HepG2 (cell line): ENCODE measurements at regions of chr10 and their contacts with region 1.

Region 1: GRCh38 chr10:112446855-112447711 is at the starts of genes VTI1A and ZDHHC6:
- DNase-seq: peak; percentile 81
- ATAC-seq: peak; percentile 99
- H3K4me3 ChIP-seq: peak within 1 kb of the TSS; percentile 92 to 96 (median 96)
- H3K27ac ChIP-seq: peak within 1 kb of the TSS; percentile 94
- H3K4me1 ChIP-seq: peaks cover 32% of the 10 kb centered on the region
- H3K27me3 ChIP-seq: no peaks in the 10 kb centered on the region; a peak in 1 of 5 replicates
- CTCF ChIP-seq: peak; percentile 60
- EP300 ChIP-seq: 0 out of 4 replicates have a peak, but pooled peaks of 1 of the 2 experiments have one; percentile 8
- POLR2A ChIP-seq: peak; percentile 81 to 91
- RAD21 ChIP-seq: no peak; the same call in 1 of the 2 replicates
- total RNA-seq, gene VTI1A: 32.7 and 38.7 TPM in 2 replicates
- total RNA-seq, gene ZDHHC6: 49.4 and 50.9 TPM in 2 replicates

Region 2: GRCh38 chr10:112140110-112140970 is 306.7 kb before region 1 on chr10:
- CTCF ChIA-PET with region 1: no interaction called
- POLR2A ChIA-PET with region 1: no interaction called
- in situ Hi-C with region 1: loop called (anchors 25 kb)
- intact Hi-C with region 1: no loop called
- DNase-seq: peak; percentile 78
- ATAC-seq: peak; percentile 80
- H3K4me3 ChIP-seq: no peak overlapping the region
- H3K27ac ChIP-seq: no peak overlapping the region
- H3K4me1 ChIP-seq: no peaks in the 10 kb centered on the region
- H3K27me3 ChIP-seq: no peaks in the 10 kb centered on the region
- CTCF ChIP-seq: peak; percentile 86
- EP300 ChIP-seq: no peak
- POLR2A ChIP-seq: no peak
- RAD21 ChIP-seq: peak; percentile 76

Region 3: DNA sequence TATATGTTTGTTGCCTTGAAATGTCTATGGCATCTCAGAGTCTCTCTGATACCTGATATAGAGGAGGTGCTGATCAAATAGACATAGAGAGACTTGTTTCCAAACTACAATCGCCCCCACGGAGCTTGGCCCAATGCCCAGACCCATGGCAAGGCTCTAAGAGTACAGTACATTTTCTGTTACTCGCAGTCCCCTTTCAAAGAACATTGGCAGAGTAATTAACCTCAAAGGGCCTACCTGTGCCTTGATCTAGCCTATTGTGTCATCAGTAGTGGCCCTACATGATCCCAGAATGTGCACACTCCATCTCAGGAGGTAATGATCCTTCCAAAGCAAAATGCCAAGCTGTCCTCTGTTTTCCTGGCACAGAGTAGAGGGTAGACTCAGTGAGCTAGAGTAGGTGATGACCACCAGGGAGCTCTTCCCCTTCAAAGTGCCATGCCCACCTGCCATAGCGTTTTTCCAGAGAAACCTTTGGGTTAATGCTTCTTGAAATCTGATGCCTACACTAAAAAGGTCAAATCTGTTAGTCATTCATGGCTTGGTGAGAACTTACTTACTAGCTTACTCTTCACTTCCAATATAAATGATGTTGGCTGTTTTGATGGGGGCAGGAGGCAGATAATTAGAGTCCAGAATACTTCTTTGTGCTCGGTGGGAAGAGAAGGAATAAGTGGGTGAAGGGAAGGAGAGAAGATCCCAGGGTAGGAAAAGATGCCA is 114.4 kb before region 1 on chr10:
- CTCF ChIA-PET with region 1: no interaction called
- POLR2A ChIA-PET with region 1: no interaction called
- in situ Hi-C with region 1: loop called (anchors 25 kb)
- intact Hi-C with region 1: no loop called
- DNase-seq: peak; percentile 80
- ATAC-seq: peak; percentile 60
- H3K4me3 ChIP-seq: 0 out of 6 replicates have a peak overlapping the region, but pooled peaks of 1 of the 3 experiments have one; percentile 29
- H3K27ac ChIP-seq: no peak overlapping the region
- H3K4me1 ChIP-seq: peaks cover 60% of the 10 kb centered on the region
- H3K27me3 ChIP-seq: no peaks in the 10 kb centered on the region
- CTCF ChIP-seq: no peak
- EP300 ChIP-seq: peak in 1 of 2 experiments; percentile 81; a peak in 1 of 4 replicates
- POLR2A ChIP-seq: no peak
- RAD21 ChIP-seq: no peak

Region 4: GRCh38 chr10:112394475-112394875 is 52.6 kb before region 1 on chr10:
- CTCF ChIA-PET with region 1: no interaction called
- POLR2A ChIA-PET with region 1: no interaction called
- in situ Hi-C with region 1: no loop called
- intact Hi-C with region 1: no loop called
- DNase-seq: peak; percentile 99
- ATAC-seq: peak; percentile 97
- H3K4me3 ChIP-seq: peak overlapping the region in 1 of 3 experiments; percentile 34; a peak in 1 of 6 replicates
- H3K27ac ChIP-seq: peak overlapping the region; percentile 83
- H3K4me1 ChIP-seq: peaks cover 71% of the 10 kb centered on the region
- H3K27me3 ChIP-seq: no peaks in the 10 kb centered on the region
- CTCF ChIP-seq: no peak
- EP300 ChIP-seq: peak; percentile 15 to 96; a peak in 2 of 4 replicates
- POLR2A ChIP-seq: 0 out of 4 replicates have a peak, but pooled peaks of 1 of the 2 experiments have one; percentile 39
- RAD21 ChIP-seq: peak; percentile 41; the same call in 1 of the 2 replicates

Region 5: GRCh38 chr10:112481602-112482001 is 34.5 kb after region 1 on chr10:
- CTCF ChIA-PET with region 1: no interaction called
- POLR2A ChIA-PET with region 1: no interaction called
- in situ Hi-C with region 1: no loop called
- intact Hi-C with region 1: no loop called
- DNase-seq: no peak
- ATAC-seq: no peak
- H3K4me3 ChIP-seq: no peak overlapping the region
- H3K27ac ChIP-seq: no peak overlapping the region
- H3K4me1 ChIP-seq: no peaks in the 10 kb centered on the region
- H3K27me3 ChIP-seq: no peaks in the 10 kb centered on the region
- CTCF ChIP-seq: no peak
- EP300 ChIP-seq: no peak
- POLR2A ChIP-seq: no peak
- RAD21 ChIP-seq: no peak